ENCODE measurements at regions of chr2 and their contacts with region 1.

Region 1: DNA sequence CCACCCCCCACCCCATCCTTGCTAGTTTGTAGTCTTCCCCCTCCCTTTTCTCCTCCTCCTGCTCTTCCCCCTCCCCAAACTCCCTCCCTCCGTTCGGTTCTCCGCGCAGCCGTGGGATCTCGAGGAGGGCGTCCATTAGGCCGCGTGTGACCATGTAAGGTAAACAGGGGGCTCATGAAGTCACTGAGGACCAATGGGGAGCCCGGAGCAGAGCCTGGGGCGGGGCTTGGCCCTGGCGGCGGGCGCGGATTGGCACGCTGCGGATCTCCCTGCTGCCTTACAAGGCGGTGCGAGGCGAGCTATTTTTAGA is 246 bp upstream of the KLF7 start:
- DNase-seq: peak; percentile 95
- ATAC-seq: peak; percentile 93
- H3K4me3 ChIP-seq: 0 out of 2 replicates have a peak overlapping the region, but pooled peaks have one; percentile 71
- H3K27ac ChIP-seq: peak overlapping the region; percentile 97
- H3K4me1 ChIP-seq: peaks cover 4% of the 10 kb centered on the region; the same call in 1 of the 2 replicates
- H3K27me3 ChIP-seq: no peaks in the 10 kb centered on the region
- CTCF ChIP-seq: no peak
- EP300 ChIP-seq: no peak
- POLR2A ChIP-seq: no peak
- RAD21 ChIP-seq: no peak

Region 2: GRCh38 chr2:206756816-206757215 is 409.2 kb before region 1 on chr2:
- CTCF ChIA-PET with region 1: no interaction called
- POLR2A ChIA-PET with region 1: no interaction called
- RAD21 ChIA-PET with region 1: no interaction called
- SMC1A ChIA-PET with region 1: no interaction called
- in situ Hi-C with region 1: no loop called
- intact Hi-C with region 1: no loop called
- DNase-seq: no peak
- ATAC-seq: no peak
- H3K4me3 ChIP-seq: no peak overlapping the region
- H3K27ac ChIP-seq: no peak overlapping the region
- H3K4me1 ChIP-seq: no peaks in the 10 kb centered on the region
- H3K27me3 ChIP-seq: no peaks in the 10 kb centered on the region; a peak in 1 of 4 replicates
- CTCF ChIP-seq: no peak
- EP300 ChIP-seq: no peak
- POLR2A ChIP-seq: no peak
- RAD21 ChIP-seq: no peak

Region 3: DNA sequence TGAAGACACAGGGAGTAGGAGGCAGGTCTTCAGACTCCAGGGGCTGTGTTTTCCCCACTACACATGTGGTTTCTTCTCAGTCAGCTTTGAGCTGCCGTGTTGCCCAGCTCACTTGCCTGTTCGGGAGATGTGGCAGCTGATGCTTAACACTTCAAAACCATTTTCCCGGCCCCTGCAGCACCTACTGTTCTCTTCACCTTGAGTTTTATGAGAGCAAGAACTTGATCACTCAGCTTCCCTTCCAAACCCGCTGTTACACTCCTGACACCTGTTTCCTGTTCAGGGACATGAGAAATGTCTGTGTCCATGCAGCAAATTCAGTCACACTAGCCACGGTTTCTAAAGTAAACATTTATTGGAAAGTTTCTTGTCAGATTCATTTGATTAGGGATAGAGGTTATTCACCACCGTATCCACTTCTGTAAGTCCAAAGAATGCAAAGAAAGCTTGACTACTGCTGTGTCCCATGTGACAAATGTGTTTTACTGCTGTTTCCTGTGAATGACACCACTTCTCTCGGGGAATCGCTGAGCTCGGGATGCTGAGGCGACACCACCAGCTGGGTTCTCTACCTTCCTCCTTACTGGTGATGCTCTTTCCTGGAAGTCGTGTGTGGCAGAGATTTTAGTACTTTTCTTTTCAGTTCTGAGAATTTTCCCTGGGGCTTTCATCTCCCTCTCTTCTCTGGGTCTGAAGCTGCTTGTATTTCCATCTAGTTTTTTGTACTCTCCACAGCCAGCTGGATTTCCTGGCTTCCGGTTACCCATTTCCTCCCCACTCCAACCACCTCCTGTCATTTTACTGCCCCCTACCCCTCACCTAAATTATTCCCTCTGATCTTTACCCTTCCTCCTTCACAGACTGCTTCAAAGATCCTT is 92.0 kb before region 1 on chr2:
- CTCF ChIA-PET with region 1: interaction called, 4 read pairs
- POLR2A ChIA-PET with region 1: interaction called, 6 read pairs
- RAD21 ChIA-PET with region 1: interaction called, 15 read pairs
- SMC1A ChIA-PET with region 1: interaction called, 11 read pairs
- in situ Hi-C with region 1: no loop called
- intact Hi-C with region 1: no loop called
- DNase-seq: no peak
- ATAC-seq: peak; percentile 56
- H3K4me3 ChIP-seq: no peak overlapping the region
- H3K27ac ChIP-seq: no peak overlapping the region
- H3K4me1 ChIP-seq: peaks cover 23% of the 10 kb centered on the region
- H3K27me3 ChIP-seq: no peaks in the 10 kb centered on the region
- CTCF ChIP-seq: no peak
- EP300 ChIP-seq: no peak
- POLR2A ChIP-seq: no peak
- RAD21 ChIP-seq: no peak

Region 4: GRCh38 chr2:207143215-207144172 is 22.5 kb before region 1 on chr2:
- CTCF ChIA-PET with region 1: interaction called, 25 read pairs
- POLR2A ChIA-PET with region 1: interaction called, 56 read pairs
- RAD21 ChIA-PET with region 1: interaction called, 58 read pairs
- SMC1A ChIA-PET with region 1: interaction called, 52 read pairs
- in situ Hi-C with region 1: no loop called
- intact Hi-C with region 1: no loop called
- DNase-seq: no peak
- ATAC-seq: peak; percentile 72
- H3K4me3 ChIP-seq: peak overlapping the region; percentile 29
- H3K27ac ChIP-seq: peak overlapping the region; percentile 77
- H3K4me1 ChIP-seq: peaks cover 20% of the 10 kb centered on the region
- H3K27me3 ChIP-seq: no peaks in the 10 kb centered on the region
- CTCF ChIP-seq: no peak
- EP300 ChIP-seq: no peak
- POLR2A ChIP-seq: no peak
- RAD21 ChIP-seq: no peak

Region 5: DNA sequence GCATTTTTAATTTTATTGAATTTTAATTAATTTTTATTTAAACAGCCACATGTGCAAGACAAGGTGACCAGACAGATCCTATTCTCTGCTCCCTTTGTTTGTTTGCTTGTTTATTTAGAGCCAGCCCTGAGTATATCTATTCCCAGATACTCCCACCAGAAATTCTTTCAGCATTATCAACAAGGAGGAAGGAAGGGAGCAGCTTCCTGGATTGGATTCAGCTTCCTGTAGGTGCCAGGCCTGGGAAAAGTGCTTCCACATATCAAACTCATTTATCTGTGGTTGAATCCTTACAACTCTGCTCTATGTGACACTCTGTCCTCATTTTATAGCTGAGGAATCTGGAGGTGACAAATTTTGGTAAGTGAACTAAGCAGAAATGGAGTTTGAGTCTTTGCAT is 60.2 kb after region 1 on chr2:
- CTCF ChIA-PET with region 1: no interaction called
- POLR2A ChIA-PET with region 1: interaction called, 4 read pairs
- RAD21 ChIA-PET with region 1: interaction called, 5 read pairs
- SMC1A ChIA-PET with region 1: interaction called, 4 read pairs
- in situ Hi-C with region 1: no loop called
- intact Hi-C with region 1: loop called (anchors 2 kb)
- DNase-seq: no peak
- ATAC-seq: no peak
- H3K4me3 ChIP-seq: no peak overlapping the region
- H3K27ac ChIP-seq: no peak overlapping the region
- H3K4me1 ChIP-seq: peaks cover 17% of the 10 kb centered on the region
- H3K27me3 ChIP-seq: no peaks in the 10 kb centered on the region
- CTCF ChIP-seq: no peak
- EP300 ChIP-seq: no peak
- POLR2A ChIP-seq: no peak
- RAD21 ChIP-seq: no peak

Region 6: DNA sequence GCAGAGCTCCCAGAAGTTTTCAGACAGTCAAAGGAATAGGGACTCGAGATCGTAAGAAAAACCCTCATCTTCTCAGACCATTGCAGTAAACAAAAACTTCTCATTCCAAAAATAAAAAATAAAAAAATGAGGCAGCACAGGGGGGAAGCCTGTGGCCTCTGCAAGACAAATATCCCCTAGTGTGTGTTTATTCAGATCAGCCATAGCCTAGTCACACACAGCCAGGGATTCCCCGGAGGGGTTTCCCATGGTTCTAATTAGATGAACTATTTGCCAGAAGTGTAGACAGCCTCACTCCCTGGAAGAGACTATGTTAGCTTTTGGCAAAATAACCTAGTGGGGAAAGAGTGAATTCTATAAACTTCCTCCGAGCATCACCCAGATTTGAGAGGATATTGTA is 122.6 kb after region 1 on chr2:
- CTCF ChIA-PET with region 1: no interaction called
- POLR2A ChIA-PET with region 1: interaction called, 4 read pairs
- RAD21 ChIA-PET with region 1: interaction called, 11 read pairs
- SMC1A ChIA-PET with region 1: interaction called, 4 read pairs
- in situ Hi-C with region 1: no loop called
- intact Hi-C with region 1: loop called (anchors 5 kb)
- DNase-seq: peak; percentile 59
- ATAC-seq: peak; percentile 89
- H3K4me3 ChIP-seq: no peak overlapping the region
- H3K27ac ChIP-seq: no peak overlapping the region
- H3K4me1 ChIP-seq: peaks cover 46% of the 10 kb centered on the region
- H3K27me3 ChIP-seq: no peaks in the 10 kb centered on the region
- CTCF ChIP-seq: no peak
- EP300 ChIP-seq: peak; percentile 41 to 44; a peak in 2 of 4 replicates
- POLR2A ChIP-seq: no peak
- RAD21 ChIP-seq: no peak

Region 7: GRCh38 chr2:207529330-207530159 is 363.6 kb after region 1 on chr2 and contains the start of gene CREB1:
- CTCF ChIA-PET with region 1: no interaction called
- POLR2A ChIA-PET with region 1: interaction called, 8 read pairs
- RAD21 ChIA-PET with region 1: interaction called, 5 read pairs
- SMC1A ChIA-PET with region 1: interaction called, 3 read pairs
- in situ Hi-C with region 1: no loop called
- intact Hi-C with region 1: loop called (anchors 5 kb)
- DNase-seq: peak; percentile 93
- ATAC-seq: peak; percentile 87
- H3K4me3 ChIP-seq: peak within 1 kb of the TSS; percentile 97
- H3K27ac ChIP-seq: peak within 1 kb of the TSS; percentile 99
- H3K4me1 ChIP-seq: peaks cover 26% of the 10 kb centered on the region
- H3K27me3 ChIP-seq: no peaks in the 10 kb centered on the region
- CTCF ChIP-seq: no peak; a peak in 1 of 6 replicates
- EP300 ChIP-seq: peak; percentile 77 to 79; a peak in 2 of 4 replicates
- POLR2A ChIP-seq: peak; percentile 94
- RAD21 ChIP-seq: no peak
- polyA plus RNA-seq, gene CREB1: 13.4 to 22.2 TPM